HEK293T (cell line): ENCODE measurements at regions of chr7 and their contacts with region 1.

Region 1: DNA sequence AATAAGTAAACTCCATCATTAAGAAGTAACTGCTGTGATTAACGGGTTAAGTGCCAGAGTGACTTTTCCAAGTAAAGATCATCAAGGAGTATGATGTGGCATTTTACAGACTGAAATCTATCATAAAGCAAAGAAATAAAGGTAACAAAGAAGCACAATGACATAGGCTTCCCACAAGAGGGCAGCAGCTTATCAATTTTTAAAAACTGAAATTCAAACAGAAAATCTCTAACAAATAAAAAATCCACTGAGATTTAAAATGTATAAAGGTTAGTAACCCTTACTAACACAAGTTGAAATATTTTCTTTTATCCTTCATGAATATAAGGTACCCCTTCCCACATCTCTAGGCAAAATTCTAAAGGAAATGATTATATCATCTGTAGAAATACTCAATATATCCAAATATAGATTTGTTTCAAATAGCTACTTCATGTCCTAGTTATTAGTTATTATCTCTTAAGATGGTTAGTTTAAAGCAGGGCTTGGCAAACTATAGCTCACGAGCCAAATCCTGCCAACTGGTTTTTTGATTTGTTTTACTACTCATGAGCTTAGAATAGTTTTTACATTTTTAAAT is 29.2 kb downstream of the FAM3C start:
- DNase-seq: peak; percentile 14

Region 2: GRCh38 chr7:121395961-121396757 is 29.2 kb after region 1 on chr7 and contains the start of gene FAM3C:
- CTCF ChIA-PET with region 1: interaction called, 10 read pairs
- POLR2A ChIA-PET with region 1: interaction called, 3 read pairs
- DNase-seq: peak; percentile 92